MCF 10A (cell line): ENCODE measurements at regions of chr3 and their contacts with region 1.

Region 1: GRCh38 chr3:132034486-132035464 is at the start of gene CPNE4:
- DNase-seq: peak; percentile 87
- H3K4me3 Mint-ChIP-seq: peak within 1 kb of the TSS; percentile 73
- H3K27ac Mint-ChIP-seq: no peak within 1 kb of the TSS
- H3K4me1 Mint-ChIP-seq: peaks cover 10% of the 10 kb centered on the region
- H3K27me3 Mint-ChIP-seq: peaks cover 44% of the 10 kb centered on the region
- CTCF ChIP-seq: peak; percentile 91
- total RNA-seq, gene CPNE4: not detected in 2 replicates

Region 2: DNA sequence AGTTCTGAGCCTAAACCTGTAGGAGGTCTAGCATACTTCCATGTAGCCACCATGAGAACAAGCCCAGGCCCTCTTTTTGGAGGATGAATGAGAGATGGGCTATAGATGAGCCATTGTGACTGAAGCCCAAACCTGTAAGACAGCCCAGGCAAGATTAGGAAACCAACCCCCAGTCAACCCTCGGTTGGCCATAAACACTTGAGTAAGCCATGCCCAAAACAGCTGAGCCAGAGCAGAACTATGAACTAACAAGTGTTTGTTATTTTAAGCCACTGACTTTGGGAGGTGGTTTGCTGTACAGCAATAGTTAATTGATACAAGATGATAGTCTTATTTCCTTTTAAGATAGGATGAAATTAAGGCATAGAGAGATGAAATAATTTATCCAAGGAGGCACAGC is 12.4 kb after region 1 on chr3:
- CTCF ChIA-PET with region 1: interaction called, 24 read pairs
- POLR2A ChIA-PET with region 1: interaction called, 5 read pairs
- intact Hi-C with region 1: no loop called
- DNase-seq: no peak
- H3K4me3 Mint-ChIP-seq: no peak overlapping the region
- H3K27ac Mint-ChIP-seq: no peak overlapping the region
- H3K4me1 Mint-ChIP-seq: no peaks in the 10 kb centered on the region
- H3K27me3 Mint-ChIP-seq: no peaks in the 10 kb centered on the region
- CTCF ChIP-seq: no peak

Region 3: GRCh38 chr3:132119531-132119930 is 84.8 kb after region 1 on chr3:
- CTCF ChIA-PET with region 1: interaction called, 12 read pairs
- POLR2A ChIA-PET with region 1: no interaction called
- intact Hi-C with region 1: no loop called
- DNase-seq: no peak
- H3K4me3 Mint-ChIP-seq: no peak overlapping the region
- H3K27ac Mint-ChIP-seq: no peak overlapping the region
- H3K4me1 Mint-ChIP-seq: no peaks in the 10 kb centered on the region
- H3K27me3 Mint-ChIP-seq: no peaks in the 10 kb centered on the region
- CTCF ChIP-seq: no peak

Region 4: DNA sequence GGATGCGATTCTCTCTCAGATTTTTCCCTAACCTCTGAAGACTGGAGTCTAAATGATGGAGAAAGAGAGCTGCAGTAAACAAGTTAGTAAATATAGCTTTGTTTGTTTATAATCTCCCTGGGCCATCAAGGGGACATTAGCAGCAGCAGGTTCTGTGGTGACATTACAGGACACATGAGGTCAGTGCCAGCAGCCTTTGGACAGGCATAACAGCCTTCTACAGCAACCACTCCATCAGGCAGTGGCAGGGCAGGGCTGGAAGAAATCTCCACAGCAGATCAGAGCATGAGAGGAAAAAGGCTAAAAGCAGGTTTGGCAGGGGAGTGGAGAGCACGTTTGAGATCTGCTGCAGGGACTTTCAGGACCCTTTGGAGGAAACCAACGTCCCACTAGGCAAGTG is 154.8 kb after region 1 on chr3:
- CTCF ChIA-PET with region 1: interaction called, 447 read pairs
- POLR2A ChIA-PET with region 1: no interaction called
- intact Hi-C with region 1: no loop called
- DNase-seq: no peak
- H3K4me3 Mint-ChIP-seq: no peak overlapping the region
- H3K27ac Mint-ChIP-seq: no peak overlapping the region
- H3K4me1 Mint-ChIP-seq: no peaks in the 10 kb centered on the region
- H3K27me3 Mint-ChIP-seq: peaks cover 14% of the 10 kb centered on the region
- CTCF ChIP-seq: no peak

Region 5: GRCh38 chr3:132222868-132223538 is 188.2 kb after region 1 on chr3:
- CTCF ChIA-PET with region 1: interaction called, 11 read pairs
- POLR2A ChIA-PET with region 1: no interaction called
- intact Hi-C with region 1: no loop called
- DNase-seq: peak; percentile 48
- H3K4me3 Mint-ChIP-seq: no peak overlapping the region
- H3K27ac Mint-ChIP-seq: no peak overlapping the region
- H3K4me1 Mint-ChIP-seq: peaks cover 4% of the 10 kb centered on the region
- H3K27me3 Mint-ChIP-seq: no peaks in the 10 kb centered on the region
- CTCF ChIP-seq: no peak